ENCODE measurements at regions of chr1 and their contacts with region 1.

Region 1: DNA sequence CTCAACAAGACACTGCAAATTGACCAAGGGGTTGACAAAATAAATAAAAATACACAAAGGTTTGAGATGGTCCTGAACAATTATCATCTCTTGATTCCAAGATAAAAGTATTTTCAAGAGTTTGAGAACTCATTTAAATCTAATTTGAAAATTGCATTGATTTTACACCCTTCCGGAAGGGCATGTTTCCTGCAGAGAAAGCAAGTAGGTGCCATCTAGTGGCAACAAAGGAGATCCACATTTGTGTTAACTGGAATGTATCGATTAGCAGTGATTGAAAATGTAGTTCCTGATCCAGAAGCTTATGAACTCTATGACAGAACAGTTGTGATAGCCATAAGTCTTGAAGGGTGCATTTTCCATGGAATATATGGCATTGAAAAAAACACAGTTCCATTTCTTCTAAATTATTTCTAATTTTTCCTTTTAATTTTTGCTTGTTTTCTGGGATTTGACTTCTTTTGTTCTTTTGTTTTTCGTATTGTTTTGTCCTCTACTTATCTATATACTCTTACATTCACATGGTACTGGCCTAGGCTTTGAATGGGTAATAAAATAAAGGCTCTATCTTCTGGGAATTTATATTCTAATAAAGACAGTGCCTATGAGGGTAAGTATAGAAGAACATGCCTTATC is 143.7 kb downstream of the DNM3 start:
- DNase-seq: peak; percentile 73
- H3K4me3 ChIP-seq: no peak overlapping the region
- H3K27ac ChIP-seq: no peak overlapping the region
- H3K4me1 ChIP-seq: no peaks in the 10 kb centered on the region
- H3K27me3 ChIP-seq: no peaks in the 10 kb centered on the region

Region 2: DNA sequence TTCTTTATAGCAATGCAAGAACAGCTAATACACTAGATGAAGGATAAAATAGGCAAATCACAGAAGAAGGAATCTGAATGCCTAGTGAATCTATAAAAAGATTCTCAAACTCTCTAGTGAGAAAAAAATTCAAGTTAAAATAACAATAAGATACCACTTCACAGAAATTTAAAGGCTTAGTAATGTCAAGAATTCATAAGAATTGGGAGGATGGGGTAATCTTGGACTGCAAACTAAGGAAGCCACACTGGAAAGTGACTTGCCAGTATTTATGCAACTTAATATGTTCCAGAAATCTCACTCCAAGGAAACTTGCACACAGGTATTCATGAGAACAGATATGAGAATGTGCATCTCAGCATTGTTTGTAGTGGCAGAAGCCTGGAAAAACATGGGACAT is 538.6 kb before region 1 on chr1:
- in situ Hi-C with region 1: no loop called
- DNase-seq: peak; percentile 12
- H3K4me3 ChIP-seq: no peak overlapping the region
- H3K27ac ChIP-seq: no peak overlapping the region
- H3K4me1 ChIP-seq: peaks cover 5% of the 10 kb centered on the region
- H3K27me3 ChIP-seq: no peaks in the 10 kb centered on the region

Region 3: GRCh38 chr1:171644805-171645483 is 340.0 kb before region 1 on chr1:
- in situ Hi-C with region 1: loop called (anchors 5 kb)
- DNase-seq: peak; percentile 89
- H3K4me3 ChIP-seq: no peak overlapping the region
- H3K27ac ChIP-seq: no peak overlapping the region
- H3K4me1 ChIP-seq: peaks cover 16% of the 10 kb centered on the region; the same call in 1 of the 2 replicates
- H3K27me3 ChIP-seq: no peaks in the 10 kb centered on the region

Region 4: DNA sequence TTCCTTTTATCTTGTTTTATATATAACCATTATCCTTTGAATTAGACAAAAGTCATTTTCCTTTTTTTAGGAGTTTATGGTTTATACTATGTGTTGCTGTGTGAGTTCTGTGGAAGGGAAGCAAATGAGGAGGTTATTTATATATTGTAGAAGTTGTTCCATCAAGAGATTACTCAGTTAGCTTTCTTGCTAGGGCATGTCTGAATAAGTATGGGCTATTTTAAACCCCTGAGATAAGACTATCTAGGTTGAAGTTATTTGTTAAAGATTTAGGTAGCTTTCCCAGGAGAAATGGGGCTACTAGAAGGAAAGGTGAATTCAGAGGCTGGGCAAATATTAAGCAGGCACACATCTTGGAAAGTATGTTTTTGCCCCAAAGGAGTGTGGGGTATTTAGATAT is 227.0 kb before region 1 on chr1:
- in situ Hi-C with region 1: no loop called
- DNase-seq: no peak
- H3K4me3 ChIP-seq: no peak overlapping the region
- H3K27ac ChIP-seq: no peak overlapping the region
- H3K4me1 ChIP-seq: peaks cover 15% of the 10 kb centered on the region
- H3K27me3 ChIP-seq: no peaks in the 10 kb centered on the region

Region 5: GRCh38 chr1:171814692-171815091 is 170.3 kb before region 1 on chr1:
- in situ Hi-C with region 1: loop called (anchors 5 kb)
- DNase-seq: peak; percentile 77
- H3K4me3 ChIP-seq: no peak overlapping the region
- H3K27ac ChIP-seq: no peak overlapping the region
- H3K4me1 ChIP-seq: peaks cover 24% of the 10 kb centered on the region
- H3K27me3 ChIP-seq: no peaks in the 10 kb centered on the region